Dorsolateral prefrontal cortex (tissue), 120 donors: ENCODE measurements at regions of chr18 and their contacts with region 1.

Region 1: DNA sequence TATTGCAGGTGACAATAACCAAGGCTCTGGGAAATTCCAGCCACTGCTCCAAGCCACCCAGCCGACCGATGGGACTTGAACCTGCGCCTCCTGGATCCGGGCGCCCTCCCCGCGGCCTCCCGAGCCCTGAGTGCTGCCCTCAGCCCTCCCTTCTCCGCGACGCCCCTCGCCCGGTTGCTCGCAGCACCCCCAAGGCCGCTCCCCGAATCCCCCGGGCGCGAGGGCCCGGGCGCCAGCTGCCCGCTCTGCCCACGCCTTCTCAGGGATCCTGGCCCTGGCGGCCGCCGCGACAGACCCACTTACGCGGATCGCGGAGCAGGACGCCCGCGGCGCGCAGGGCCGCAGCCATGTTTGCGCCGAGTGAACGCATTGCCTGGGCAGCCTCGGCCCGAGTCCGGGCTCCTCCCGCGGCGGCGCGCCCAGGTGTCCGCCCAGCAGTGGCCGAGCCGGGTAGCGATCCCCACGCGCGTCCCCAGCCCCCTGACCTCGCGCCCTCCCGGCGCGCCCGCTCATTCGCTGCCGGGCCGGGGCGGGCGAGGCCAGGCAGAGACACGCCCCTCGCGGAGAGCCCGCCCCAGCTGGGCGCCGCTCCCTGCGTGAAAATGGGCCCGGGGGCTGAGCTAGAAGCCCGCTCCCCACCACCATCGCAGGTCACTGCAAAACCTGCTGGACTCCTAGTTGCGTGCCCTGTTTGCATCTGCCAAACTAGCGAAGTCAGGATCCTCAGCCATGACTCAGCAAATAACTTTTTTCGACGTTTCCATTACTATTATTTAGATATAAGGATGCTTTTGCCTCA is at the start of gene FECH:
- DNase-seq: peak; percentile 70 to 93 (median 79)
- H3K4me3 ChIP-seq: peak within 1 kb of the TSS; percentile 72 to 99 (median 94)
- H3K27ac ChIP-seq: peak within 1 kb of the TSS; percentile 20 to 97 (median 93)
- H3K27me3 ChIP-seq: no peaks in the 10 kb centered on the region
- CTCF ChIP-seq: peak in 25 of 56 donors; percentile 2 to 48 (median 25)
- total RNA-seq, gene FECH: 19.5 to 49.7 (median 35.0) TPM

Region 2: DNA sequence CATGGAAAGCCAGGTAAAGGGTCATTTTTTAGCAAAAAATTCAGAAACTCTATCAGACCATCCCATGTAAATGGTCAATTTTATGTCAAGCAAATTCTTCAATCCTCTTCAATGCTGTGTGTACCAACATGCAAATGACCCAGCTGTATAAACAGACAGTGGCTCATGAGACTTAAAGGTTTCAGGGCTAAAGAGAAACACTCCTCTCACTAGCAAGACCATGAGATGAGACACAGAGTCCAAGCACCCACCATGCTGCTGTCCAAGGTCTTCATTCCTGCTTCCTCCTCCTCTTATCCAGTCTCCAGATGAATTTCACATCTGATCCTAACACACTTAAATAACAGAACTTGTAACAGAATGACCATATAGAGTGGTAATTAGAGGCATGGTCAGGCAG is 182.1 kb before region 1 on chr18:
- intact Hi-C with region 1: no loop called
- DNase-seq: no peak
- H3K4me3 ChIP-seq: no peak overlapping the region
- H3K27ac ChIP-seq: no peak overlapping the region
- H3K27me3 ChIP-seq: peaks cover 0 to 19% (median 0%) of the 10 kb centered on the region in 45 donors
- CTCF ChIP-seq: no peak

Region 3: GRCh38 chr18:57561728-57562423 is 24.6 kb before region 1 on chr18:
- intact Hi-C with region 1: loop called in 1 of 2 experiments (anchors 1 kb)
- DNase-seq: peak in 1 of 10 donors; percentile 24
- H3K4me3 ChIP-seq: peak overlapping the region in 33 of 59 donors; percentile 2 to 51 (median 24)
- H3K27ac ChIP-seq: peak overlapping the region in 28 of 59 donors; percentile 0 to 69 (median 36)
- H3K27me3 ChIP-seq: no peaks in the 10 kb centered on the region
- CTCF ChIP-seq: peak; percentile 67 to 93 (median 86)

Region 4: GRCh38 chr18:57621246-57621604 is 34.8 kb after region 1 on chr18:
- intact Hi-C with region 1: loop called in 1 of 2 experiments (anchors 2 kb)
- DNase-seq: no peak
- H3K4me3 ChIP-seq: peak overlapping the region; percentile 57 to 97 (median 86)
- H3K27ac ChIP-seq: peak overlapping the region; percentile 34 to 94 (median 87)
- H3K27me3 ChIP-seq: no peaks in the 10 kb centered on the region
- CTCF ChIP-seq: no peak